Lower leg skin (tissue), 4 donors: ENCODE measurements at regions of chr2 and their contacts with region 1.

Region 1: GRCh38 chr2:165953655-165954606 is at the start of gene TTC21B:
- DNase-seq: peak; percentile 93 to 99
- H3K4me3 ChIP-seq: peak within 1 kb of the TSS; percentile 49
- CTCF ChIP-seq: no peak
- POLR2A ChIP-seq: no peak
- total RNA-seq, gene TTC21B: 18.5 to 30.2 (median 29.5) TPM

Region 2: DNA sequence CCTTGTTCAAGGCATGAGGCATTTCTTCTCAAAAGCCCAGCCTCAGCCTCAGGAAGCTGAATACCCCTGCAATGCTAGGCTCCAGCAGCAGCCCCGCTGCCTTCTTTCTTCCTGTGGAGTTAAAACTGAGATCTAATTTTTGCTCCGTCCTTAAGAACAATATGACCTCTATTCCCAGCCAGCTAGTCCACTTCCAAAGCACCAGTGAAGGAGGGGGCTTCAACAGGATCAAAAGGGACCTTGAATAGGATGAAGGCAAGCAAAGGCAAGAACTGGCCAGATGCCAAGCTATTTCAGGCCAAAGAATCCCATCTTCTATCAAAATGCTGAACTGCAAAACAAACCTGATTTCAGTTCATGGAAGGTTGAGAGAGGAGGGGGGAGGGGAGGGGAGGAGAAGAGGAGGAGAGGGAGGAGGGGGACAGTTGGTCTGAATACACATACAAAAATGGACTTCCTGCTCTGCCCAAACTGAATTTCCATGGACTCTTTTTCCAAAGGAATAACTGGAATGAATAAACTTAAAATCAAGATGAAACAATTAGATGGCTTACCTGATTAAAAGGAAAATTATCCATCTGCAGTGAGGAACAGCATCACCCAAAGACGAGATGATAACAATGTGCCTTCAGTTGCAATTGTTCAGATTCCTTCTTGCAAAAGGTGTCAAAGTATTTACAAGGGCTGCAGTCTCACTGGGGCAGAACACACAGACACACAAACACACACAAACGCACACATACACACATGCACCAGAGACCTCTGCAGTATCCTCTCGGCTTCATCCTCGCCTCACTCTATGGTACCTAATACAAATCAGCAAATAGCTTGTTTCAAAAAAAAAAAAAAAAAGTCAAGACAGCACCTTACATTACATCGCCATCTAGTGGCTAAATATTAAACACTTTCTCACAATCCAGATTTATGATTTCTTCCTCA is 173.6 kb after region 1 on chr2 and contains the start of gene SCN1A:
- intact Hi-C with region 1: loop called (anchors 10 kb)
- DNase-seq: no peak
- H3K4me3 ChIP-seq: no peak within 1 kb of the TSS
- CTCF ChIP-seq: peak in 1 of 3 donors; percentile 11
- POLR2A ChIP-seq: no peak
- total RNA-seq, gene SCN1A: 0.04 TPM in 1 of 4 donors, not detected in the others